ENCODE measurements at regions of chr2 and their contacts with region 1.

Region 1: DNA sequence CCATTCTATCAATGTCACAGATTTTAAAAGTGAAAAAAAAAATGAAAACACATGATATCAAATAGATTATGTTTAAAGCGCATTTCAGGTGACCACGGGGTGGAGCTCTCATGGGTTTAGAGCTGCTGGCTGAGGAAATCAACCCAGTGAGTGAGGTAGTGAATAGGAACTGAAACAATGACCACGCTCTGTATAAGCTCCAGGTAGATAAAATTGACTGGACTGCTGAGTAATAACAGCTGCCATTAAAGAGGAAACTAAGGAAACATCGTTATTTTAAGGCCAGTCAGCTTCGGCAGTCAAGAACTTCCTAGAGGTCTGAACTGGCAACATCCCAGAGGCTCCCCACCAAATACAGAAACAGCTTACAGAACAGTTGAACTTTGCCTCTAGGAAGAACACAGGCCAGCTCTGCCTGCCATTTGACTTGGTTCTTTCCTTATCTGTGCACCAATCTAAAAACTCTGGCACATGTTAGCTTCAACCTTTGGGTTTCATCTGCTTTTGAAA is 185.9 kb downstream of the PDE1A start:
- DNase-seq: peak; percentile 40
- H3K4me3 Mint-ChIP-seq: no peak overlapping the region
- H3K27ac Mint-ChIP-seq: no peak overlapping the region
- H3K4me1 Mint-ChIP-seq: no peaks in the 10 kb centered on the region
- H3K27me3 Mint-ChIP-seq: peaks cover 3% of the 10 kb centered on the region

Region 2: GRCh38 chr2:182207049-182207746 is 33.7 kb before region 1 on chr2:
- CTCF ChIA-PET with region 1: no interaction called
- intact Hi-C with region 1: no loop called
- DNase-seq: no peak
- H3K4me3 Mint-ChIP-seq: no peak overlapping the region
- H3K27ac Mint-ChIP-seq: no peak overlapping the region
- H3K4me1 Mint-ChIP-seq: no peaks in the 10 kb centered on the region
- H3K27me3 Mint-ChIP-seq: peaks cover 3% of the 10 kb centered on the region

Region 3: DNA sequence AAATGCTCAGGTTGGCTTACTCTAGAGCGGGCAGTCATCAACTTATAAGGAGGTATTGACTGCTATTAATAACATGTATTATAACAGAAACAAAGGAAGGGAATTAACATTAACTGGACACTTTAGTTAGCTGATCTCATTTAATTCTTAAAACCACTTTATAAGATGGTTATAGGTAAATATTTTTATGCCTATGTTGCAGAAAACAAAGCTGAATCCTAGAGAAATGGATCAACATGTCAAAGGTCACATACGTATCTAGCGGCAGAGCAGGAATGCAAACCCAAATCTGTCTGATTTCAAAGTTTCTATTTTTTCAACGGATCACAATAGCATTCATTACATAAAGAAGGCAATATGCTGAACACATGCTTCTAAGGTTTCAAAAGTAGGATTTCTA is 14.1 kb before region 1 on chr2:
- CTCF ChIA-PET with region 1: interaction called, 12 read pairs
- intact Hi-C with region 1: no loop called
- DNase-seq: no peak
- H3K4me3 Mint-ChIP-seq: no peak overlapping the region
- H3K27ac Mint-ChIP-seq: no peak overlapping the region
- H3K4me1 Mint-ChIP-seq: no peaks in the 10 kb centered on the region
- H3K27me3 Mint-ChIP-seq: no peaks in the 10 kb centered on the region

Region 4: GRCh38 chr2:182366625-182367024 is 125.7 kb after region 1 on chr2:
- CTCF ChIA-PET with region 1: no interaction called
- intact Hi-C with region 1: no loop called
- DNase-seq: no peak
- H3K4me3 Mint-ChIP-seq: no peak overlapping the region
- H3K27ac Mint-ChIP-seq: no peak overlapping the region
- H3K4me1 Mint-ChIP-seq: no peaks in the 10 kb centered on the region
- H3K27me3 Mint-ChIP-seq: no peaks in the 10 kb centered on the region

Measured in activated naive CD4-positive, alpha-beta T cell treated with anti-CD3 and anti-CD28 coated beads for 36 hours (primary cell).